Endothelial cell of umbilical vein (primary cell): ENCODE measurements at regions of chr10 and their contacts with region 1.

Region 1: DNA sequence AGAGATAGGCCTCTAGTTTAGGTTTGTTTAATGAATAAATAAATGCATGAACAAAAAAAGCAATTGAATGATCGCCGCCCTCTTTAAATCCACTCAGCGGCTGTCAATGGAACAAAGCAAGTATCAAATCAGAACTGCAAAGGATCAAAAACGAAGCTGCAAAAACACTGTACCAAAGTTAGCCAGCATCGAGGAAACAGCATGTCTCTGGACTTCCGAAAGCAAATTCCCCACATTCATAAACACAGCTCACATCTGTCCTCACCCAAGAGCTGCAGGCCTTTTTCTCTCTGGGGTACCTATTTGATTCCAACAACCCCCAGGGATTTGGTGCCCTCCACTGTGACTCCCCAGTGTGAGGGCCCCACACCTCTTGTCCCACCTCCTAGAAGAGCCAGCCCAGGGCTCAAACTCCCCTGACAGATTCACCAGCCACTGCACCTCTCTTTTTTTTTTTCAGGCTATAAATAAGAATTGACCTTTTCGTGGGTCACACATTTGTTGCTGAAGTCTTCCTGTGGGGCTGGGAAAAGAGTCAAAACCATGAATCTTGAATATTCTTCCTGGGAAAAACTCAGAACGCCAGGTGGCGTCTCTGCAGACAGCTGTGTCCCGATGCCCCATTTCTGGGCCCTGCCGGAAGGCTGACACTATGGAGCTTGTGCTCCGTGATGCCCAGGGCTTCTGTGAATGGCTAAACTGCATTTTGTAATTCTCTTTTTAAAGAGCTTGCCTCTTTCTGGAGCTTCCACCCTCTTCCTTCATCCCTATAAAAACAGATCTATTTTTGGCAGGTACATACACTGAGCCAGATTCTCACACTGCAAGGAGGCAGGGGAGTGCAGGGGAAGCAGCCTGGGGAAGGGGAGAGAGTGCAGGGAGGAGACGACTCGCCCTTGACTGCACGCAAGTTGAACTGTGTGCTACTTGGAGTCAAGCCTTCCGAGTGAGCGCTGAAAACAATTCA is 51.7 kb downstream of the HSPA12A start:
- DNase-seq: no peak
- H3K4me3 ChIP-seq: no peak overlapping the region
- H3K27ac ChIP-seq: no peak overlapping the region
- H3K4me1 ChIP-seq: no peaks in the 10 kb centered on the region
- H3K27me3 ChIP-seq: no peaks in the 10 kb centered on the region
- CTCF ChIP-seq: peak in 1 of 2 donors; percentile 12
- POLR2A ChIP-seq: no peak

Region 2: GRCh38 chr10:116608686-116609594 is 81.7 kb before region 1 on chr10:
- CTCF ChIA-PET with region 1: no interaction called
- POLR2A ChIA-PET with region 1: no interaction called
- dilution Hi-C with region 1: no loop called
- intact Hi-C with region 1: no loop called
- DNase-seq: no peak
- H3K4me3 ChIP-seq: no peak overlapping the region
- H3K27ac ChIP-seq: no peak overlapping the region
- H3K4me1 ChIP-seq: no peaks in the 10 kb centered on the region
- H3K27me3 ChIP-seq: no peaks in the 10 kb centered on the region
- CTCF ChIP-seq: no peak
- POLR2A ChIP-seq: no peak

Region 3: GRCh38 chr10:116765547-116766162 is 75.0 kb after region 1 on chr10:
- CTCF ChIA-PET with region 1: no interaction called
- POLR2A ChIA-PET with region 1: no interaction called
- dilution Hi-C with region 1: no loop called
- intact Hi-C with region 1: loop called (anchors 1 kb)
- DNase-seq: peak; percentile 8
- H3K4me3 ChIP-seq: no peak overlapping the region
- H3K27ac ChIP-seq: no peak overlapping the region
- H3K4me1 ChIP-seq: no peaks in the 10 kb centered on the region
- H3K27me3 ChIP-seq: no peaks in the 10 kb centered on the region
- CTCF ChIP-seq: peak; percentile 19 to 40
- POLR2A ChIP-seq: no peak

Region 4: DNA sequence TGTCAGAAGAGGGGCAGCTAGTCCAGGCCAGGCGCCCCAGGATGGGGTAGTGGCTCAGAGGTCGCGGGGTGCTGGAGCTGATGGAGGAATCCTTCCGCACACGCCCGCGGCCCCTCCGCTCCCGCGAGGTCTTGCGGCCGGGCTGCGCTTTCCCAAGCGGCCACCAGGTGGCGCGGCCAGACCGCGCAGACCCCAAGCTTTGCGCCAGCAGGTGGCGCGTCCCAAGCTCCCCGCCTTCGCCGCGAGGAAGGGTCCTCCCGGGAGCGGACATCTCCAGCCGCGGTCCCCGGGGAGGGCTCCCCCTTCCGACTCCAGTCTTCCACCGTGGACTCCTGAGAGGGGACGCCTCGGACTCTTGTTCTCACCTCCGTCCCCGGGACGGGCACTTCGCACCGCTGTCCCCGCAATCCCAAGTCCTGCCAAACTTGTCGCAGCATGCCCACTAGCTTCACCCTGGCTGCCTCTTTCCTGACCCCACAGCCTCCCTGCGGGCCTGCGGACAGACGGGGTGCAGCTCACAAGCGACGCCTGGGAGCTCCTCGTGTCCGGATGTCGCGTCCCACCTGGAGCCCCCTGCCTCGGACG is 526.1 kb after region 1 on chr10:
- CTCF ChIA-PET with region 1: no interaction called
- POLR2A ChIA-PET with region 1: no interaction called
- dilution Hi-C with region 1: no loop called
- intact Hi-C with region 1: no loop called
- DNase-seq: peak; percentile 59
- H3K4me3 ChIP-seq: peak overlapping the region in 2 of 3 experiments; percentile 41 to 50
- H3K27ac ChIP-seq: no peak overlapping the region
- H3K4me1 ChIP-seq: peaks cover 5% of the 10 kb centered on the region
- H3K27me3 ChIP-seq: peaks cover 1 to 7% of the 10 kb centered on the region in 2 experiments
- CTCF ChIP-seq: peak; percentile 99 to 100
- POLR2A ChIP-seq: no peak